Transverse colon (tissue), 4 donors: ENCODE measurements at regions of chr2 and their contacts with region 1.

Region 1: DNA sequence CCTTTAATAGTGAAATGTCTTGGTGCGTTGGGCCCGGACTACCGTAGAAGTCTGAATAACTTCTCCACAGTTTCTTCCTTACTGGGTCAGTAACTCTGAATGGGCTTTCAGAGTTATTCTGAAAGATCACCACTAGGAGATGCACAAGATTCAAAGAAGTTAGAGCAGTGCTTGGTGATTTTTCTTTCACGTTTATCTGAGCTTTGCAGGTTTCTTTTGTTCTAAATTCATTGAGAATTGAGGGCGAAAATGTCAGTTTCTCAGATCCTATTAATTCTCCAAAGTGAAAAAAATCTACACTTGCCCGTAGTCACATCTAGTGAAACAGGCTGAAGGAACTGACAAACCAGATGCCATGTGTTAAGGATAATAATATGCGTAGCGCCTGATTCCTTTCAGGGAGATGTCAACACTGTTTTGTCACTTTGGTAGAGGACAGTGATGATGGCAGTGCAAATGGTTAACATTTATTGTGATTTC is 70.1 kb downstream of the QPCT start:
- DNase-seq: no peak
- H3K4me3 ChIP-seq: no peak overlapping the region
- H3K27ac ChIP-seq: peak overlapping the region in 3 of 4 donors; percentile 34 to 46 (median 43)
- H3K4me1 ChIP-seq: peaks cover 0 to 10% (median 2%) of the 10 kb centered on the region in 4 donors
- H3K27me3 ChIP-seq: no peaks in the 10 kb centered on the region
- CTCF ChIP-seq: peak; percentile 76 to 98 (median 83)
- EP300 ChIP-seq: no peak
- POLR2A ChIP-seq: no peak

Region 2: DNA sequence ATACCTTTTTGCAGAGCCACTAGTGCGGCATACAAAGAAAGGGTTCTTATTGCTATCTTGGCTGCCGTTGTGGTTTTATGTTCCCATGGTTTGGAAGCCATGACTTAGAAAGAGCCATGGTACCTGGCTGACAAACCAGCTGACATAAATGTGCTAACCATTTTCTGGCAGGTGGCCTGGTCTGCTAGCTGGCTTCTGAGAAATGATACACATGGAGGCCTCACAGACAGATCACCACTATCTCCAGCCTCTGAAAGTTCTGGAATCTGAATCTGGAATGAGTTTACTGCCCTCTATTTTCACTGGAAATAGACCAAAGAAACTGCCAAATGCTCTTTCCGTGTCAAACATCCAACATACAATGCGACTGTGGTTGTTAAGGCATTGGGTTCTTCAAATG is 53.7 kb after region 1 on chr2:
- in situ Hi-C with region 1: no loop called
- intact Hi-C with region 1: no loop called
- DNase-seq: no peak
- H3K4me3 ChIP-seq: no peak overlapping the region
- H3K27ac ChIP-seq: no peak overlapping the region
- H3K4me1 ChIP-seq: peaks cover 0 to 4% (median 0%) of the 10 kb centered on the region in 4 donors
- H3K27me3 ChIP-seq: no peaks in the 10 kb centered on the region
- CTCF ChIP-seq: no peak
- EP300 ChIP-seq: no peak
- POLR2A ChIP-seq: no peak

Region 3: DNA sequence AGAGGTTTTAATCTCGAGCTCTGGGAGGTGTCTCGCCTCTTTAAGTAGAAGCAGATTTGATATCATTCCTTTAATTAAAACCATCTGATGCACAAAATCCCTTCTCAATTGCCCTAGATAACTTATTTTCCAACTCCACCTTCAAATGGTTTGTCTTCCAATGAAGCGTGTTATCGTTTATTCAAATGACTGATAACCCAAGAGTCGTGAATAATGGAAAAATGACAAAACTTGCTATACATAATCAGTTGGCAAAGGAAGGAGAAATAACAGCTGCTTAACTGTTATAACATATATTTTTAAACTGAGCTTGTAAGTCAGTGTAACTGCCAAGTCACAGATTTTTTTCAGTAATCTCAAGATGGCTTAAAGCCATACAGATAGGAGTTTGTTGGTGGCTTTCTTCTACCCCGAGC is 74.5 kb after region 1 on chr2:
- in situ Hi-C with region 1: no loop called
- intact Hi-C with region 1: loop called (anchors 2 kb)
- DNase-seq: no peak
- H3K4me3 ChIP-seq: no peak overlapping the region
- H3K27ac ChIP-seq: no peak overlapping the region
- H3K4me1 ChIP-seq: no peaks in the 10 kb centered on the region
- H3K27me3 ChIP-seq: no peaks in the 10 kb centered on the region
- CTCF ChIP-seq: no peak
- EP300 ChIP-seq: no peak
- POLR2A ChIP-seq: no peak

Region 4: GRCh38 chr2:37549598-37549997 is 135.1 kb after region 1 on chr2:
- in situ Hi-C with region 1: loop called in 1 of 4 experiments (anchors 10 kb)
- intact Hi-C with region 1: no loop called
- DNase-seq: no peak
- H3K4me3 ChIP-seq: no peak overlapping the region
- H3K27ac ChIP-seq: no peak overlapping the region
- H3K4me1 ChIP-seq: no peaks in the 10 kb centered on the region
- H3K27me3 ChIP-seq: no peaks in the 10 kb centered on the region
- CTCF ChIP-seq: no peak
- EP300 ChIP-seq: no peak
- POLR2A ChIP-seq: no peak

Region 5: GRCh38 chr2:37672104-37672869 is 257.8 kb after region 1 on chr2:
- in situ Hi-C with region 1: loop called in 2 of 4 experiments (anchors 10 to 25 kb)
- intact Hi-C with region 1: no loop called
- DNase-seq: peak; percentile 83
- H3K4me3 ChIP-seq: peak overlapping the region; percentile 68 to 84 (median 81)
- H3K27ac ChIP-seq: peak overlapping the region; percentile 93 to 96 (median 94)
- H3K4me1 ChIP-seq: peaks cover 0 to 42% (median 13%) of the 10 kb centered on the region in 4 donors
- H3K27me3 ChIP-seq: no peaks in the 10 kb centered on the region
- CTCF ChIP-seq: no peak
- EP300 ChIP-seq: no peak
- POLR2A ChIP-seq: no peak

Region 6: DNA sequence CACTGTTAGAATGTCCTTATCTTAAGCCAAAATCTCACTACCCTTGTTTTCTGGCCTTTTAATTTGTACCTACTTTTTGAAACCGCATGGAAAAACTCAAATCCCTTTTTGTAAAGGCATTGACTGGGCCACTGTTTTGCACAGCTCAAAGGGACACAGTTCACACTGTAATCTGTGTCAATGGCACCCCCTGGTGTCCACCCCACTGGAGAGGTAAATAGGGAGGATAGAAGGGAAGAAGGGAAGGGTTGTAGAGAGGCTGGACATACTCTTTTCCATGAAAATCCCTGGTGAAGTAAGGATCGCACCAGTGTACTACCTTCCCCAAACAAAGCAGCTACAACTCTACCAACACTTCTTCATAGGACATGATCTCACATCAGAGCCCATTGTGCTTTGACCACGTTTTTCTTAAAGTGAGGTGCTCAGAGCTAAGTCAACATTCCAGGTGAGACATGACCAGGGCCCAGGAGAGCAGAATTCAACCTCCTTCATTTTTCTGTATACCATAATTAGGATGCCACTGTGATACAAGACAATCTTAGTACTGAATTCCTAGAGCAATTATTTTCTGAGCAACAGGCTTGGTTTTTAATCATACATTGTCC is 418.2 kb after region 1 on chr2:
- in situ Hi-C with region 1: loop called in 3 of 4 experiments (anchors 5 to 10 kb)
- intact Hi-C with region 1: loop called (anchors 5 kb)
- DNase-seq: peak; percentile 92
- H3K4me3 ChIP-seq: no peak overlapping the region
- H3K27ac ChIP-seq: peak overlapping the region in 2 of 4 donors; percentile 8 to 52
- H3K4me1 ChIP-seq: peaks cover 0 to 11% (median 2%) of the 10 kb centered on the region in 4 donors
- H3K27me3 ChIP-seq: no peaks in the 10 kb centered on the region
- CTCF ChIP-seq: peak; percentile 71 to 94 (median 80)
- EP300 ChIP-seq: no peak
- POLR2A ChIP-seq: no peak

Region 7: GRCh38 chr2:37877457-37878315 is 463.2 kb after region 1 on chr2:
- in situ Hi-C with region 1: no loop called
- intact Hi-C with region 1: loop called (anchors 5 kb)
- DNase-seq: no peak
- H3K4me3 ChIP-seq: no peak overlapping the region
- H3K27ac ChIP-seq: no peak overlapping the region
- H3K4me1 ChIP-seq: peaks cover 0 to 4% (median 1%) of the 10 kb centered on the region in 4 donors
- H3K27me3 ChIP-seq: no peaks in the 10 kb centered on the region
- CTCF ChIP-seq: peak; percentile 68 to 85 (median 77)
- EP300 ChIP-seq: no peak
- POLR2A ChIP-seq: no peak